Naive thymus-derived CD4-positive, alpha-beta T cell (primary cell): ENCODE measurements at regions of chr11 and their contacts with region 1.

Region 1: DNA sequence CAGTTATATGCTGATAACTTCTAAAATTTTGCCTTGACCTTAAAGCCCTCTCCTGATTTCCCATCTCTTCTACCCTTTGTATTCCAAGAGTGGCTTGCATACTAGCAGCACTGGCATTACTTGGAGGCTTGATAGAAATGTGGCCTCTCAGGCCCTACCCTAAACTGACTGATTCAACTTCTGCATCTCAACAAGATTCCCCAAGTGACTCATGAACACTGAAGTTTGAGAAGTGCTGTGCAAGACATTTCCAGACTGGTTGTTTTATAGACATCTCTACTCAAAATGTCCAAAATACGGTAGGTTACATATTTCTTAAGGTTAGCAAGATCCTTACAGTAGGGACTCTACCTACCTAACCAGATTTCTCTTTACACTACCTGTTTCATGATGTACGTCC is 48.6 kb downstream of the SESN3 start:
- DNase-seq: no peak
- ATAC-seq: no peak
- H3K4me3 ChIP-seq: no peak overlapping the region
- H3K4me3 Mint-ChIP-seq: no peak overlapping the region
- H3K27ac ChIP-seq: no peak overlapping the region
- H3K27ac Mint-ChIP-seq: peak overlapping the region in 6 of 9 donors; percentile 13 to 70 (median 42)
- H3K4me1 ChIP-seq: no peaks in the 10 kb centered on the region
- H3K4me1 Mint-ChIP-seq: peaks cover 4 to 30% (median 13%) of the 10 kb centered on the region in 7 donors
- H3K27me3 ChIP-seq: no peaks in the 10 kb centered on the region
- H3K27me3 Mint-ChIP-seq: no peaks in the 10 kb centered on the region

Region 2: GRCh38 chr11:95193541-95193940 is 11.1 kb after region 1 on chr11:
- CTCF ChIA-PET with region 1: interaction called, 3 read pairs
- POLR2A ChIA-PET with region 1: interaction called, 3 read pairs
- intact Hi-C with region 1: loop called in 1 of 2 experiments (anchors 1 kb)
- DNase-seq: no peak
- ATAC-seq: no peak
- H3K4me3 ChIP-seq: no peak overlapping the region
- H3K4me3 Mint-ChIP-seq: no peak overlapping the region
- H3K27ac ChIP-seq: no peak overlapping the region
- H3K27ac Mint-ChIP-seq: no peak overlapping the region
- H3K4me1 ChIP-seq: no peaks in the 10 kb centered on the region
- H3K4me1 Mint-ChIP-seq: peaks cover 11 to 66% (median 43%) of the 10 kb centered on the region in 7 donors
- H3K27me3 ChIP-seq: no peaks in the 10 kb centered on the region
- H3K27me3 Mint-ChIP-seq: no peaks in the 10 kb centered on the region